ENCODE measurements at regions of chr18 and their contacts with region 1.

Region 1: GRCh38 chr18:59402432-59403090 is 43.5 kb upstream of the LMAN1 start:
- DNase-seq: peak; percentile 44 to 82 (median 66)
- ATAC-seq: peak; percentile 100
- H3K4me3 ChIP-seq: no peak overlapping the region
- H3K27ac ChIP-seq: no peak overlapping the region
- H3K4me1 ChIP-seq: no peaks in the 10 kb centered on the region
- H3K27me3 ChIP-seq: peaks cover 0 to 5% of the 10 kb centered on the region in 2 donors
- CTCF ChIP-seq: peak; percentile 80 to 92

Region 2: DNA sequence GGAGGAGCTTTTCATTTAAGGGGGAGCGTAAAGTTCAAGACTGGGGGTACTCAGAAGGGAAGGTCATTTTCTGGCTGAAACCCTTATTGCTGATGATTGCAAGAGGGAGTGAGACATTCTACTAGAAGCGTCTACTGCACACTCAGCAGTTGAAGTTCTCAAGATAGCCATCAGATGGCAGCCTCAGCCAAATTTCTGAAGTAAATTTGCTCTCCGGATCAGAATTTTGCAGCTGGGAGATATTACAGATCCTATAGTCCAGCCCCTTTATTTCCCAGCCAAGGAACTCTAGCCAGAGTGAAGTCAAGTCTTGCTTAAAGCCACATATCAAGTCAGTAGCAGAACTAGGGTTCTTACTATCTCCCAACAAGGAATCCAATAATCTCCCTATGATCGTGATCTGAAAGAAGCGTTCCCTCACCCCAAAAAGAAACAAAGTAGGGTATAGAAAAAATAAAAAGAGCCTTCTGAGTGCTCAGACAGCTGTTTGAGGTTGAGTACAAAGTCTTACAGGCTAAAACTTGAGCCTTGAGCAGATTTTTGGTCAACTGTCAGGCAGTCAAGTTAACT is 153.3 kb before region 1 on chr18:
- intact Hi-C with region 1: loop called in 1 of 2 experiments (anchors 5 kb)
- DNase-seq: peak in 2 of 4 donors; percentile 84 to 91
- ATAC-seq: peak; percentile 89
- H3K4me3 ChIP-seq: no peak overlapping the region
- H3K27ac ChIP-seq: no peak overlapping the region
- H3K4me1 ChIP-seq: no peaks in the 10 kb centered on the region
- H3K27me3 ChIP-seq: peaks cover 0 to 33% of the 10 kb centered on the region in 2 donors
- CTCF ChIP-seq: peak; percentile 63 to 67

Region 3: DNA sequence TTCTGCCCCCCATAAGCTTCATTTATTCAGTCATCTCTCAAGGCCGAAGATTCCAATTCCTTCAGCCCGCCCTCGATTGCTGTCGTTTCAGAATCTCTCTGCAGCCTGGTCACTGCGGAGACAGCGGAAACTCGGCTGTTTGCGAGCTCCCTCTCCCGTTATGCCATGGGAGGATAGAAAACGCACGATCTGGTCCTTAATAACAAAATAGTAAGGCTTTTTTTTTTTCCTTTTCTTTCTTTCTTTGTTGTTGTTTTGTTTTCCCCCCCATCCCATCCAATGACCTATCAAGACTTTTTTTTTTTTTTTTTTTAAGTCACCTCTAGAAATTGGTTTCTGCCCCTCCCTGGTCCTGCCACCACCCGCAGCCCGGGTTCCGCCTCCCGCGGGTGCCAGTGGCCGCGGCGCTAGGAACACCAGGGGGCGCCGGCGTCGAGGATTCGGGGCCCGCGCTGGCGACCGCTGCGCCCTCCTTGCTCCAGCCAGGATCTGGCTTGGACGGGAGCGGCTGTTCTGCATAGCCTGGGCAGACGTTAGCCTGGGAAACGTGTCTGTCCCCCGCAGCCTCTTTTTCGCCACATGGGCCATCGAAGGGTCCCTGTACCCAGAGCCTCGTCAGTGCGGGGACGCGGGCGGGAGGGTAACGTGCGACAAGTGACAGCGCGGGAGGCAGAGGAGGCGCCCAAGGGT is 94.2 kb before region 1 on chr18:
- intact Hi-C with region 1: loop called in 1 of 2 experiments (anchors 5 kb)
- DNase-seq: peak; percentile 66 to 92 (median 79)
- ATAC-seq: peak; percentile 100
- H3K4me3 ChIP-seq: peak overlapping the region in 1 of 2 donors; percentile 17
- H3K27ac ChIP-seq: no peak overlapping the region
- H3K4me1 ChIP-seq: peaks cover 0 to 4% of the 10 kb centered on the region in 2 donors
- H3K27me3 ChIP-seq: peaks cover 10 to 70% of the 10 kb centered on the region in 2 donors
- CTCF ChIP-seq: peak; percentile 75 to 80

Measured in left lung (tissue), 14 donors.